ENCODE measurements at regions of chr12 and their contacts with region 1.

Region 1: DNA sequence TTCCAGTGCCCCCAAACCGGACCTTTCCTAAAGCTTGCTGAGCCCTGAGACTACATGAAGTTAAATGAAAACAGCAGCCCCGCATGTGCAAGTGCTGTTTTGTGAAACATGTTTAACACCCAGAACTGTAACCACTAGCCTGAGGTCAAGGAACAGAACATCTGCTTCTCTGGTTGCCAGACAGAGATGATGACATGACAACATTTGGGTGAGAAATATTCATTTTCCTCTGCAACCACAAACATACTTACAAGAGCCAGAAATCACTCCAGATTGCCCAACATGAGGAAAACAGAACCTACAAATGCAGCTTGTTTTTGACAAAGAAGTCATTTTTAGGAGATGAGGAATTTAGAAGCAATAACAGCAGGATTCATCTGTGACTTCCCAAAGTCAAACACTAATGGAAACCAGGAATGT is 110.4 kb downstream of the BCAT1 start:
- DNase-seq: peak; percentile 36
- H3K4me3 Mint-ChIP-seq: peak overlapping the region; percentile 54
- H3K27ac Mint-ChIP-seq: peak overlapping the region; percentile 90
- H3K4me1 Mint-ChIP-seq: peaks cover 59% of the 10 kb centered on the region
- H3K27me3 Mint-ChIP-seq: no peaks in the 10 kb centered on the region

Region 2: DNA sequence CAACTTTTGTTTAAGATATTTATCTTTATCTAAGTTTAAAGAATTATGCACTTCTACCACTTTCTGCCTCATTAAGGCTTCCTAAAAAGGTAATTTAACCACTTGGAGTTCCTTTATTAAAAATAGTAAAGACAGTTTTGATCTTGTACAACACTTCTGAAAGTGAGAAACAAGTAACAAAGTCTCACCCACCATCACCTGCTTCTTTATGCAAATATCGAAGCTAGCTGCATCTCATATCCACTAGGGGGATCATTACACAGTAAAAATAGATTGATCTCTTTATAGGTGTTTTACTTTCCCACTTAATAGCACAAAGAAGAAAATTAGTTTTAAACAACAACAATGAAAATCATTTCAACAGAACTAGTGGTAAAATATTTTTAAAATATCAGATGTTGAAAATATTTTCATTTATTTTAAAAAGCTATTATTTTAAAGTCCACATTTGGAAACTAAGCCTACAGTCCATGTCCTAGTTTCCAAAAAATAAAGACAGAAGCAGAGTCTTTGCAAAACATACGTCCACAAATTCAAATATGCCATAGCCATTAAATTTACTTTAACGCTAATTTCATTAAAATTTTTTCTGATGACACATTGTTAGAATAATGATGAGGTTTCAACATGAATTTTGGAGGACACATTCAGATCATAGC is 729.0 kb before region 1 on chr12:
- intact Hi-C with region 1: loop called (anchors 1 kb)
- DNase-seq: no peak
- H3K4me3 Mint-ChIP-seq: no peak overlapping the region
- H3K27ac Mint-ChIP-seq: no peak overlapping the region
- H3K4me1 Mint-ChIP-seq: no peaks in the 10 kb centered on the region
- H3K27me3 Mint-ChIP-seq: no peaks in the 10 kb centered on the region

Region 3: GRCh38 chr12:24730489-24730896 is 108.0 kb before region 1 on chr12:
- intact Hi-C with region 1: loop called (anchors 1 kb)
- DNase-seq: no peak
- H3K4me3 Mint-ChIP-seq: no peak overlapping the region
- H3K27ac Mint-ChIP-seq: no peak overlapping the region
- H3K4me1 Mint-ChIP-seq: peaks cover 19% of the 10 kb centered on the region
- H3K27me3 Mint-ChIP-seq: no peaks in the 10 kb centered on the region

Region 4: DNA sequence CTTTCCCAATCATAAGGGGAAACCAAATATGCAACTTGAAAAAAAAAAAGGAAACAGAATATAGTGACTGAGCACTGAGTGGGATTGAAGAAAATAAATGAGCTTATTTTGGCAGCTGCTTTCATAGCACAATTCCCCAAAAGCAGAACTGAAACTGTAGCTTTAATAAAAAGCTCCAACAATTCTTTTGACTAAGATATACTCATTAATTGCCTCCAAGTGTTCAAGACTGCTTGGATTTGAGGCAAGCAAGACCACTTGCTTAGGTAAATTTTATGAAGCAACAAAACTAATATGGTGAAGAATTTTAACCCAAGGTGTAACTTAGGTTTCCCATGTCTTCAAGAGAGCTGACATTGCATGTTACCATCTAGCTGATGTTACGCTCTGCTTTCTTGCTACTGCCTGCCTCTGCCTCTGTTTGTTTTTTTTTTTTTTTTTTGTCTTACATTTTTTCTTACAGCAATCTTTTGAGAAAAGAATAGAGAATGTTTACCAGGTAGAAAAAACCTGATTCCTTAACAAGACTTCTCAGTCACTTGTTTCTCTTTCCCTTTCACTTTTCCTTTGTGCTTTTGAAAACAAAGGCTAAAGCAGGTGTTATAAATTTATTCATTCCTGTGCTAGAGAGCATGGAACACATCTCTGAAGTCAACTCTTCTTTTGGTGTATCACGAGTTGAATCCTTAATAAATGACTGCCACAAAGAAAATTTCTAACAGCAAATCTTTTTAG is 24.0 kb before region 1 on chr12:
- intact Hi-C with region 1: loop called (anchors 1 kb)
- DNase-seq: no peak
- H3K4me3 Mint-ChIP-seq: peak overlapping the region; percentile 83
- H3K27ac Mint-ChIP-seq: peak overlapping the region; percentile 90
- H3K4me1 Mint-ChIP-seq: peaks cover 32% of the 10 kb centered on the region
- H3K27me3 Mint-ChIP-seq: no peaks in the 10 kb centered on the region

Region 5: GRCh38 chr12:24861766-24862575 is 23.4 kb after region 1 on chr12:
- intact Hi-C with region 1: no loop called
- DNase-seq: no peak
- H3K4me3 Mint-ChIP-seq: no peak overlapping the region
- H3K27ac Mint-ChIP-seq: no peak overlapping the region
- H3K4me1 Mint-ChIP-seq: peaks cover 39% of the 10 kb centered on the region
- H3K27me3 Mint-ChIP-seq: no peaks in the 10 kb centered on the region

Region 6: GRCh38 chr12:24921251-24922038 is 82.9 kb after region 1 on chr12:
- intact Hi-C with region 1: loop called (anchors 1 kb)
- DNase-seq: no peak
- H3K4me3 Mint-ChIP-seq: no peak overlapping the region
- H3K27ac Mint-ChIP-seq: peak overlapping the region; percentile 42
- H3K4me1 Mint-ChIP-seq: peaks cover 44% of the 10 kb centered on the region
- H3K27me3 Mint-ChIP-seq: peaks cover 2% of the 10 kb centered on the region

Region 7: DNA sequence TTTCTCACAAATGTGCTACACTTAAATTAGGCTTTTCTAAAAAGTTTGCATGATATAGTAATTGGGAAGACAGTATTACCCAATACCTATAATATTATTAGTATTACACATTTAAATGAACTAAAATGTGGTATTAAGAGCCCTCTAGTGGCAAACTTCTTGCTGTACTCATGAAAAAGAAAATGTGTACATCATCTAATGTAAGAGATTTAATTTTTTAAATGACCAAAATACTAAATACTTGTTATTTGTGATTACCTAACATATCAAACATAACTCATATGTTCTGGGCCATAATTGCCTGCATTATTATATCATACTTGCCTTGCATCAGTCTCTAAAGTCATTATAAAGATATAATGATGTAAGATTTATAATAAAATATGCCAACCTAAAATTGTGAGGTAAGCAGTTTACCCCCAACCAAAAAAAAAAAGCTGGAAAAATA is 292.2 kb after region 1 on chr12:
- intact Hi-C with region 1: loop called (anchors 5 kb)
- DNase-seq: no peak
- H3K4me3 Mint-ChIP-seq: no peak overlapping the region
- H3K27ac Mint-ChIP-seq: no peak overlapping the region
- H3K4me1 Mint-ChIP-seq: no peaks in the 10 kb centered on the region
- H3K27me3 Mint-ChIP-seq: peaks cover 3% of the 10 kb centered on the region